BJ (cell line): ENCODE measurements at regions of chr3 and their contacts with region 1.

Region 1: DNA sequence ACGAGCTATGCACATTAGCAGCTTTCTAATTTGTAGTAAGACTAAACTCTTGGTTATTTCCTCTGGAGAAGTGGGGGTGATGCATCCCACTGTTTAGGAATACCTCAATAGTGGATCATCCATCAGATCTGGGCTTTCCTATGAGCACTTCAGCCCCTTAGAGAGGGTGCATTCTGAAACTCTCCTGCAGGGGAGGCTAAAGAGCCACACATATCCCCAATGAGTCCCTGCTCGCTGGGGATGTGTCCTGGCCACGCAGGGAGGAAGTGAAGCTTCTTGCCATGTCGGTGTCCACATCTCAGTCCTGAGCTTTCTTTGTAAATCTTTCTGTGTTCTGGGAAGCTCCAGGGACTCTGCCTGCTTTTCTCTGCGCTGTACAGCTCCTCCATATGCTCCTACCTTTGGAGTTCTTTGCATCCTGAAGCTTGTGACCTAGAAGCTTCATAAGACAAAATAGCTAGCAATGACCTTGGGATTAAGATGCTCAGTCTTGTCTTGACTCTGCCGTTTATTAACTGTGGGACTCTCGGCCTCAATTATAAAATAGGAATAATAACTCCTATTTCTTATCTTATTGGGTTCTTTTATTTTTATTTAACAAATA is 28.3 kb upstream of the MASP1 start:
- DNase-seq: peak; percentile 42
- H3K4me3 ChIP-seq: no peak overlapping the region
- H3K27me3 ChIP-seq: no peaks in the 10 kb centered on the region
- CTCF ChIP-seq: peak; percentile 96

Region 2: DNA sequence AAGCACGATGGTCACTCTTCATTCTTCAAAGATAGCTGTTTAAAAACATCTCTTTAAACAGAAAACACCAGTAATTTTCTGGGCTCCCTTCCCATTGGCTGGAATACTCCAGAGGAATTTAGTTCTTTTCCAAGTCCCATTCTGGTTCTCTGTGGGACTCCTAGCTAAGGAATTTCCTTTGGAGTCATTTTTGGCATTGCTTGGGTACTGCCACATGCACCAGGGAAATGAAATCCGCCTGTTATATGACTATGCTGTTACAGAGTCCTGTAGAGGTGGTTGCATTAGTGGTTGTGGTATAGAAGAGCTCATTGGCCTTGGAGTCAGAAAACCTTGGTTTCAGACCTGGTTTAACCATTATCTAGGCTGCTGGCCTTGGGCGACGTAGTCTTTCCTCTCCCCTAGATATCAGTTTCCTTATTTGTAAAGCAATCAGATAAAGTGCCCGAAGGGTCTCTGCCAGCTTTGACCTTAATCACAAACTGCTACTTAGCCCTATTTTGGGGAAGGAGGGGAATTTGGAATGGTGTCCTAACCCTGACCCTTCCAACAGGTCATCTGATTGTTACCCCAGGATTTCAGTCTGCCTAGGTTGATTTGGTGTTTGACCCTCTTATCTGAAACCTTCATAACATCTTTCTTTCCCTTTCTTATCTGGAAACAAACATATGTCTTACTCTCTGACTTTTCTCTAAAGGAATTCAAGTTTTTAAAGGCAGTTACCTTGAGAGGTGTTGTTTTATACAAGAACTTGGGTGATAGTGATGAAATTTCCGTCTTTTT is 109.1 kb before region 1 on chr3:
- CTCF ChIA-PET with region 1: interaction called, 216 read pairs
- POLR2A ChIA-PET with region 1: no interaction called
- DNase-seq: peak; percentile 80
- H3K4me3 ChIP-seq: no peak overlapping the region
- H3K27me3 ChIP-seq: no peaks in the 10 kb centered on the region
- CTCF ChIP-seq: no peak

Region 3: DNA sequence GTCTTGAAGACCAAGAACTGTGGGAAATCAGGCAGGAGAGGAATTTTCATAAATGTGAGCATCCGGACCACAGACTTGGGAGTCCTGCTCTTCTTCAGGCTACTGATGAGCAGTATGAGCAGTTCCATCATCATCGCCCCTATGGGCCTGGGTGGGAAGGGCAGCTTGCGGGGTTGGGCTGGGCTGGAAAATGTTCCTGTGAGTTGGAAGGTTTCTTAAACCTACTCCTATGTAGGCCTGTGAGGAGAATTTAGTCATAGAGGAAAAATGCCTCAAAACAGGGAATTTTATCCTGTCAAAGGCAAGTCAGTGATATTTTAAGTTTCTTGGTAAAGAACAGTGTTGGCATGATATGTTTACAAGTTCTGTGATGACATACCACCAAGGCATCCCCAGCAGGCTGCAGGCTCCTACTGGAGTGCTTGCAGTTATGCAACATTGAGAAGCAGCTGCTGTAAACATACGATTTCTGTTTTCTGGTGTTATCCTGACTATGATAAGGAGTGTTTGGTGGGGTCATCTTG is 38.5 kb before region 1 on chr3:
- CTCF ChIA-PET with region 1: interaction called, 11 read pairs
- POLR2A ChIA-PET with region 1: no interaction called
- DNase-seq: peak; percentile 97
- H3K4me3 ChIP-seq: no peak overlapping the region
- H3K27me3 ChIP-seq: no peaks in the 10 kb centered on the region
- CTCF ChIP-seq: no peak

Region 4: DNA sequence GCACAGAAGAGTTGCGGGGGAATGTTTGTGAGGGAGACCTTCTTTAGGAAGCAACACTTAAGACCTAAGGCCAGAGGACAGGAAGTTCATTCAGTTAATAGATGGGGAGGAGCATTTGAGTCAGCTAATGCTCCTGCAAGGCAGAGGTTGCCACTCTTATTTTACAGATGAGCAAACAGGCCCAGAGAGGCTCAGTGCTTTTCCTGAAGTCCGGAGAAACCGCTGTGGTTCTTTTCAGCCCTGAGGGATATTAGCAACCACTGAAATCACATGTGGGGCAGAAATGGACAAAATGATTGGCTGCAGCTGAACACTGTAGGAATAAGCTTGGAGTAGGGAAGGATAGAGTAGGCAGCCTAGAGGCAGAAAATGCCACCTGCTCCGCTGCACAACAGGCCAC is 15.1 kb after region 1 on chr3:
- CTCF ChIA-PET with region 1: interaction called, 12 read pairs
- POLR2A ChIA-PET with region 1: no interaction called
- DNase-seq: no peak
- H3K4me3 ChIP-seq: no peak overlapping the region
- H3K27me3 ChIP-seq: peaks cover 3% of the 10 kb centered on the region; the same call in 1 of the 2 replicates
- CTCF ChIP-seq: no peak

Region 5: GRCh38 chr3:187567661-187568121 is 247.9 kb after region 1 on chr3:
- CTCF ChIA-PET with region 1: interaction called, 76 read pairs
- POLR2A ChIA-PET with region 1: interaction called, 3 read pairs
- DNase-seq: peak; percentile 90
- H3K4me3 ChIP-seq: no peak overlapping the region
- H3K27me3 ChIP-seq: no peaks in the 10 kb centered on the region
- CTCF ChIP-seq: no peak

Region 6: GRCh38 chr3:187669675-187670504 is 350.1 kb after region 1 on chr3 and contains the start of gene SST:
- CTCF ChIA-PET with region 1: interaction called, 59 read pairs
- POLR2A ChIA-PET with region 1: no interaction called
- DNase-seq: no peak
- H3K4me3 ChIP-seq: no peak within 1 kb of the TSS
- H3K27me3 ChIP-seq: peaks cover 3% of the 10 kb centered on the region
- CTCF ChIP-seq: no peak
- polyA plus RNA-seq, gene SST: 0.15 and 0.25 TPM in 2 replicates

Region 7: DNA sequence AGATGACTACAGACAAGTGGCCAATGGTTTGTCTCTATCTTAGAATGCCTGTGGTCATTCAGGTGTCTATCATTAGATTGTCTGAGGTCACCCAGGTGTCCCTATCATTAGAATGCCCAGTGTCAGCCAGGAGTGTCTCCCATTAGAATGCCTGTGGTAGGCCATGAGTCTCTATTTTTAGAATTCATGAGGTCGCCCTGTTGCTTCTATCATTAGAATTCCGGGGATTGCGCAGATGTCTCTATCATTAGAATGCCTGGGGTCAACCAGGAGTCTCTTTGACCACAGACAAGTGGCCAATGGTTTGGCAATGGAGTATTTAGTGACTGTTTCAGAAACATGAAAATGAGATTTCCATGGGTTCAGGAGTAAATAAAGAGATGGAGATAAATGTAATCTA is 375.0 kb after region 1 on chr3:
- CTCF ChIA-PET with region 1: interaction called, 23 read pairs
- POLR2A ChIA-PET with region 1: no interaction called
- DNase-seq: peak; percentile 70
- H3K4me3 ChIP-seq: no peak overlapping the region
- H3K27me3 ChIP-seq: peaks cover 1% of the 10 kb centered on the region
- CTCF ChIP-seq: no peak